Activated CD4-positive, alpha-beta memory T cell treated with anti-CD3 and anti-CD28 coated beads for 36 hours (primary cell): ENCODE measurements at regions of chr14 and their contacts with region 1.

Region 1: DNA sequence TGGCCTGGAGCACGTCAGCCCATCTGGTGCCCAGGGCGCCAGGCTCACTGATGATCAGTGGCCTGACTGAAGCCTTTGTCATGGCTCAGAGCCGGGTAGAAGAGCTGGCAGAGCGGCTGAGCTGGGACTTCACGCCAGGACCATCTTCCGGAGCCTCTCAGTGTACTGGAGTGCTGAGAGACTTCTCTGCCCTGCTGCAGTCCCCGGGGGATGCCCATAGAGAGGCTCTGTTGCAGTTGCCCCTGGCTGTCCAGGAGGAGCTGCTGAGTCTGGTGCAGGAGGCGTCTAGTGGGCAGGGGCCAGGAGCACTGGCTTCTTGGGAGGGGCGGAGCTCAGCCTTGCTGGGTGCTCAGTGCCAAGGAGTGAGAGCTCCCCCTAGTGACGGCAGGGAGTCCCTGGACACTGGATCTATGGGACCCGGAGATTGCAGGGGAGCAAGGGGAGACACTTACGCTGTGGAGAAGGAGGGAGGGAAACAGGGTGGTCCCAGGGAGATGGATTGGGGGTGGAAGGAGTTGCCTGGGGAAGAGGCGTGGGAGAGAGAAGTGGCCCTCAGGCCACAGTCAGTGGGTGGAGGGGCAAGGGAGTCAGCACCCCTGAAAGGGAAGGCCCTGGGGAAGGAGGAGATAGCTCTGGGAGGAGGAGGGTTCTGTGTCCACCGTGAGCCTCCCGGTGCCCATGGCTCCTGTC is 2.0 kb downstream of the KHNYN start:
- DNase-seq: peak; percentile 94
- H3K4me3 Mint-ChIP-seq: peak overlapping the region; percentile 91
- H3K27ac Mint-ChIP-seq: peak overlapping the region; percentile 98
- H3K4me1 Mint-ChIP-seq: peaks cover 41% of the 10 kb centered on the region
- H3K27me3 Mint-ChIP-seq: no peaks in the 10 kb centered on the region

Region 2: DNA sequence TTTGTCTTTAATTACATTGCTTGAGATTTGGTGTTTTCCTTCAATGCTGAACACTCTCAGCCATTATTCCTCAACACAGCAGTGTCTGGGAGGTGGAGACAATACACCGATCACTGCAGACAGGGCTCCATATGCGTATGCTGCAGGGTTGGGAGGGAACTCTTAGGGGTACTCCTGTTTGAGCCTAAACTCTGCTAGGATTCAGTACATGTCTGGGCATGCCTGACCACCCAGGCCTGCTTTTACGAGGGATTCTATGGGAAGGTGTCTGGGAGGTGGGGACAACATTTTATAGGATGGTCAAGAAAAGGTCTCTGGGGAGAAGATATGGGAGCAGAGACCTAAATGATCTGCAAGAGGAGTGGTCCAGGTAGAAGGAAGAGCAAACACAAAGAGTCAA is 761.2 kb before region 1 on chr14:
- CTCF ChIA-PET with region 1: no interaction called
- POLR2A ChIA-PET with region 1: no interaction called
- intact Hi-C with region 1: no loop called
- DNase-seq: no peak
- H3K4me3 Mint-ChIP-seq: no peak overlapping the region
- H3K27ac Mint-ChIP-seq: no peak overlapping the region
- H3K4me1 Mint-ChIP-seq: no peaks in the 10 kb centered on the region
- H3K27me3 Mint-ChIP-seq: peaks cover 2% of the 10 kb centered on the region

Region 3: DNA sequence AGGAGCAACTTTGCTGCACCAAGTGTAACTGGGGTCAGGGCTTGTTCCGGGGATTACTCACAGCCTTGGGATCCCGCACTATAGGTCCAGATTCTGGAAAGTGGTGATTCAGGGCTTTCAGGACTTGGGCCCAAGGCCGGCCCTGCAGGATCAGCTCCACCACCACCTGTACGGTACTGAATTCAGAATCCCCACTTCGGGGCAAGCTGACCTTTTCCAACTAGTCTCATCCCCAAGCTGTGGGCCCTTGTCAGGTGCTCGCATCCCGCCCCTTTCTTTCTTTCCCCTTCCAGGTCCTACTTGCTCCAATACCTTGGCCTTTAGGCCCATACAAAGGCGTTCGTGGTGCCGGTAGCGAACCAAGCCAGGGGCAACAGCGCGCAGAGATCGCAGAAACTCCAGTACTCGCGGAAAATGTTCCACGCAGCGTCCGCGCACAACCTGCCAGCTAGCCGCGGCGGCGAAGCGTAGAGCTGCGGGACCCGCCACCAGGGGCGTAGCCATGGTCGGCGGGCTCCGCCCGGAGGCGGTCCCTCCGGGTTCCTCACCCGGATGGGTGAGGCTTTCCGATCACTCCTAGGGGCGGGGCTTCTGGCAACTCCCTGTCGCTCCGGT is 189.8 kb before region 1 on chr14:
- CTCF ChIA-PET with region 1: interaction called, 26 read pairs
- POLR2A ChIA-PET with region 1: interaction called, 7 read pairs
- intact Hi-C with region 1: loop called (anchors 1 kb)
- DNase-seq: peak; percentile 94
- H3K4me3 Mint-ChIP-seq: peak overlapping the region; percentile 84
- H3K27ac Mint-ChIP-seq: peak overlapping the region; percentile 96
- H3K4me1 Mint-ChIP-seq: peaks cover 59% of the 10 kb centered on the region
- H3K27me3 Mint-ChIP-seq: no peaks in the 10 kb centered on the region

Region 4: DNA sequence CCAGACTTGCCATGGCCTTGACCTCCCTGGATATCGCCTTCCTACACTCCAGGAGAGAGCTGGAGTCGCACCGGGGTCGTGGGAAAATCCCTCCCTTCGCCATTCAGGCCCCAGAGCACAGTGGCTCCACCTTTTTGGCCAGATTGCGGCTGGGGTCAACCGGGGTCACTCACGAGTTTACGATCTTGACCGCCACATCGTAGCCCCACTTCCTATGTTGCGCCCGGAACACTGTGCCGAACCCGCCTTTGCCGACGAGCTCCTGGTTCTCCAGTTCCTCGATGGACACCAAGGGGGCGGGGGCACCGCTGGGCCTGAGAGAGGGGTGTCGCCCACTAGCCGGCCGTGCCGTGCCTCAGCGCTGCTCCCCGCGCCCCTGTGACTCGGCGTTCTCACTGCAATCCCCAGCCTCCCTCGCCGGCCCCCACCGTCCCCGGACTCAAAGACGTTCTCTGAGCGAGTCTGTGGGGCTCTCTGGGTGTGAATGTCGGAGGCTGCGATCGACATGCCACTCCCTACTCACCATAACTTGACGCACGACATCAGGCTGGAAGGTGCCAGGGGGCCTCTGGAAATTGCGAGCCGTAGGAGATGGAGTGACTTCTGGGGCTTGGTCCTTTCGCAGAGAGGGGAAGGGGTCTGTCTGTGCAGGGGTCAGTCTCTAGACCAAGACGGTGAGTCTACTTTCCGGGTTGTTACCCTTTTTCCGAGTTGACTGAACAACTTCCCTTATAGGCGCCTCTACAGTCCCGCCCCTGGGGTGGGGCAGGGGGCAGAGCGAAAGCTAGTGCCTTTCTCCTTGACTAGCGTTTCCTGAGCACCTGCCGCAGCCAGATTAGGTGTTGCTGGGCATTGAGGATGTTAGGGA is 92.2 kb before region 1 on chr14 and contains the start of gene RIPK3:
- CTCF ChIA-PET with region 1: interaction called, 968 read pairs
- POLR2A ChIA-PET with region 1: interaction called, 67 read pairs
- intact Hi-C with region 1: no loop called
- DNase-seq: peak; percentile 82
- H3K4me3 Mint-ChIP-seq: peak within 1 kb of the TSS; percentile 91
- H3K27ac Mint-ChIP-seq: peak within 1 kb of the TSS; percentile 75
- H3K4me1 Mint-ChIP-seq: peaks cover 19% of the 10 kb centered on the region
- H3K27me3 Mint-ChIP-seq: peaks cover 11% of the 10 kb centered on the region
- total RNA-seq, gene RIPK3: 11.0 to 11.8 TPM

Region 5: DNA sequence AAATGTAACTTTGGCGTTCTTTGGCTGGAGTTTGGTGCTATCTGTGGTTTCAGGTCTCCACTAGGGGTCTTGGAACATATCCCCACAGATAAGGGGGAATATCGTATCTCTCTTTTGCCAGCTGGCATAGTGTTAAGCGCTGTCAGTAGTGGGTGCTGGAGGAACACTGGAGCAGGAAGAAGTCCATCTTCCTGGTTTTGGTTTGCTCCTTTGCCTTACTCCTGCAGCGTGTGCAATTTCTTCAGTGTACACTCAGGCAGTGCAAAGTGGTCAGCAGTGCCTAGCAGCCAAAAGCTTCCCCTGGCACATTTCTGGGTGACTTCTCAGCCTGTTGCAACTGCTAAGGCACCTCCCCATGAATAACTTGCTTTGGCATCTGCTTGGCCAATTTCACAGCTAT is 80.2 kb before region 1 on chr14:
- CTCF ChIA-PET with region 1: interaction called, 12 read pairs
- POLR2A ChIA-PET with region 1: no interaction called
- intact Hi-C with region 1: no loop called
- DNase-seq: no peak
- H3K4me3 Mint-ChIP-seq: no peak overlapping the region
- H3K27ac Mint-ChIP-seq: no peak overlapping the region
- H3K4me1 Mint-ChIP-seq: peaks cover 6% of the 10 kb centered on the region
- H3K27me3 Mint-ChIP-seq: peaks cover 33% of the 10 kb centered on the region

Region 6: GRCh38 chr14:24366721-24367513 is 64.8 kb before region 1 on chr14:
- CTCF ChIA-PET with region 1: interaction called, 129 read pairs
- POLR2A ChIA-PET with region 1: interaction called, 19 read pairs
- intact Hi-C with region 1: loop called (anchors 1 kb)
- DNase-seq: peak; percentile 34
- H3K4me3 Mint-ChIP-seq: peak overlapping the region; percentile 55
- H3K27ac Mint-ChIP-seq: no peak overlapping the region
- H3K4me1 Mint-ChIP-seq: peaks cover 24% of the 10 kb centered on the region
- H3K27me3 Mint-ChIP-seq: peaks cover 39% of the 10 kb centered on the region

Region 7: GRCh38 chr14:24411443-24412389 is 20.0 kb before region 1 on chr14:
- CTCF ChIA-PET with region 1: interaction called, 27 read pairs
- POLR2A ChIA-PET with region 1: no interaction called
- intact Hi-C with region 1: loop called (anchors 2 kb)
- DNase-seq: peak; percentile 45
- H3K4me3 Mint-ChIP-seq: no peak overlapping the region
- H3K27ac Mint-ChIP-seq: no peak overlapping the region
- H3K4me1 Mint-ChIP-seq: no peaks in the 10 kb centered on the region
- H3K27me3 Mint-ChIP-seq: peaks cover 1% of the 10 kb centered on the region

Region 8: DNA sequence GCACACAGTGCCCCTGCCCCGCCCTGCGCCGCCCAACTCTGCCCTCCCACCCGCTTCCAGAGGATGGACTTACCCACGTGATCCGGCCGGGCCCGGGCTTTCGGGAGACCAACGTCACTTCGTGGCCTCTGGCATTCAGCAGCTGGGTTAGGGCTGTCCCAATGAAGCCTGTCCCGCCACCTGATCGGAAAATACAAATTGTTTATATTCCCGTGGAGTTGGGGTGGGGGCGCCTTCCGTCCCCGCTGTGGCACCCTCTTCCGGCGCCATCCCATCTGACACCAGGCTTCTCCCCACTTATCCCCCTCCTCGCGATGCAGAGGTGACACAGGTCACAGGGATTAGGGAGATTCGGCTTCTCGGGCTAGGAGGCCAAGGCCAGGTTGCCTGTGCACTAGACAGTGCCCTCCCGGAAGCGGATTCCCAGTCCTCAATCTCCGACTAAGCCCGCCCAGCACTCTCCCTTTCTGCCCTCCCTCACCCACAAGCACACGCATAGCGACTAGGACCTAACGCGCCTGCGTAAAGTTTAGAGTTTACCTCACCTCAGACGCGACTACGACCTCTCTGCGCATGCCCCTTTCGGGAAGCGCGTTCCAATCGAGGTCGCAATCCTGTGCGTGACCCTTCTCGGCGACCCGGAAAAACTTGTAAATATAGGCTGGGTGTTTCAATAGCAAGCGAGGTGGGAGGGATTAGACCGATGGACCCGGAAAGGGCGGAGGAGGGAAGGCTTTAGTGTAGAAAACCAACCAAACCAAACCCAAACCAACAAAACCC is 10.7 kb after region 1 on chr14 and contains the start of gene SDR39U1:
- CTCF ChIA-PET with region 1: interaction called, 89 read pairs
- POLR2A ChIA-PET with region 1: interaction called, 50 read pairs
- intact Hi-C with region 1: loop called (anchors 1 kb)
- DNase-seq: peak; percentile 98
- H3K4me3 Mint-ChIP-seq: peak within 1 kb of the TSS; percentile 95
- H3K27ac Mint-ChIP-seq: peak within 1 kb of the TSS; percentile 99
- H3K4me1 Mint-ChIP-seq: peaks cover 43% of the 10 kb centered on the region
- H3K27me3 Mint-ChIP-seq: no peaks in the 10 kb centered on the region
- total RNA-seq, gene SDR39U1: 36.2 to 43.8 TPM